IMR-90 (cell line): ENCODE measurements at regions of chr12 and their contacts with region 1.

Region 1: GRCh38 chr12:26340649-26341048 is 145.3 kb downstream of the SSPN start:
- DNase-seq: no peak
- ATAC-seq: no peak
- H3K4me3 ChIP-seq: no peak overlapping the region
- H3K27ac ChIP-seq: no peak overlapping the region
- H3K4me1 ChIP-seq: peaks cover 4% of the 10 kb centered on the region; the same call in 1 of the 2 replicates
- H3K27me3 ChIP-seq: no peaks in the 10 kb centered on the region
- CTCF ChIP-seq: no peak
- POLR2A ChIP-seq: no peak
- RAD21 ChIP-seq: no peak

Region 2: DNA sequence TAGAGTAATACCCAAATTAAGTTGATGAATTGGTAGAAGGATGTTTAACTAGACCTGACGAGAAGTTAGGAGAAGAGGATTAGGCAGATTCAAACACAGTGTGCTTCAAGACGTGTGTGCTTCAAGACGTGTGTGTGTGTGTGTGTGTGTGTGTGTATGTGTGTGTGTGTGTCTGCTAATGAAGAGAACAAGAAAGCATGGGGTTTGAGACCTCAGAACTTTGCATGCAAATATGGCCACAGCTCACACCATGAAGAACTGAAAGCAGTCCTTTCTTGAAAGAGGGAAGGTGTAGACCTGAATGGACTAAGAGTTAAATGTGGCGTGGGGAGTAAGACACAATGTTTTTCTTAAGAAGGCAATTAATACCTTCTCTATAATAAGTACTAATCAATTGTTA is 177.7 kb before region 1 on chr12:
- CTCF ChIA-PET with region 1: no interaction called
- POLR2A ChIA-PET with region 1: interaction called, 10 read pairs
- dilution Hi-C with region 1: no loop called
- in situ Hi-C with region 1: no loop called
- intact Hi-C with region 1: no loop called
- DNase-seq: no peak
- ATAC-seq: no peak
- H3K4me3 ChIP-seq: no peak overlapping the region
- H3K27ac ChIP-seq: no peak overlapping the region
- H3K4me1 ChIP-seq: no peaks in the 10 kb centered on the region
- H3K27me3 ChIP-seq: peaks cover 26% of the 10 kb centered on the region
- CTCF ChIP-seq: no peak
- POLR2A ChIP-seq: no peak
- RAD21 ChIP-seq: no peak

Region 3: GRCh38 chr12:26274441-26275312 is 66.0 kb before region 1 on chr12:
- CTCF ChIA-PET with region 1: no interaction called
- POLR2A ChIA-PET with region 1: no interaction called
- dilution Hi-C with region 1: no loop called
- in situ Hi-C with region 1: no loop called
- intact Hi-C with region 1: loop called (anchors 2 kb)
- DNase-seq: peak; percentile 100
- ATAC-seq: peak; percentile 96
- H3K4me3 ChIP-seq: no peak overlapping the region
- H3K27ac ChIP-seq: peak overlapping the region; percentile 80
- H3K4me1 ChIP-seq: peaks cover 18% of the 10 kb centered on the region
- H3K27me3 ChIP-seq: no peaks in the 10 kb centered on the region
- CTCF ChIP-seq: 0 out of 2 replicates have a peak, but pooled peaks have one; percentile 16
- POLR2A ChIP-seq: no peak; the same call in 1 of the 2 replicates
- RAD21 ChIP-seq: peak; percentile 31; the same call in 1 of the 2 replicates

Region 4: GRCh38 chr12:26499979-26500640 is 159.5 kb after region 1 on chr12:
- CTCF ChIA-PET with region 1: no interaction called
- POLR2A ChIA-PET with region 1: no interaction called
- dilution Hi-C with region 1: no loop called
- in situ Hi-C with region 1: no loop called
- intact Hi-C with region 1: no loop called
- DNase-seq: no peak
- ATAC-seq: no peak
- H3K4me3 ChIP-seq: no peak overlapping the region
- H3K27ac ChIP-seq: no peak overlapping the region
- H3K4me1 ChIP-seq: no peaks in the 10 kb centered on the region
- H3K27me3 ChIP-seq: no peaks in the 10 kb centered on the region; the same call in 1 of the 2 replicates
- CTCF ChIP-seq: no peak
- POLR2A ChIP-seq: no peak
- RAD21 ChIP-seq: no peak